ENCODE measurements at regions of chr15 and their contacts with region 1.

Region 1: DNA sequence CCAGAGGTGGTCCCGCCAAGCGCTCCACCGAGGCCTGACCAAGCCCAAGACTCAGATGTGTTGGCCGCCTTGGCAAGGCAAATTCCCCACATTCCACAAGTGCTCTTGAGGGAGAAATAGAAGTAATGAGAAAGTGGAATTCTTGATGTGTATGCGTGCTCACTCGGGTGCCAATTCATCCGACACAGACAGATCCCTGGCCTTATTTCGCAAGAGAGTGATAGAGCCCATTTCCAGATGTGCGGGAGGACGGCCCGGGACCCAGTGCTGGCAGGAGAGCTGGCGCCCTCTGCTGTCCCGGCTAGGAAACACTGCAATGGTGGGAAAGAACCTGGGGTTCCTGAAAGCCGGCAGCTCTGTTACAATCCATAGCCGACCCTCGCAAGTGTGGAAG is 76.0 kb downstream of the HMG20A start:
- DNase-seq: peak; percentile 82
- H3K4me3 ChIP-seq: no peak overlapping the region
- H3K27ac ChIP-seq: peak overlapping the region; percentile 94
- H3K4me1 ChIP-seq: peaks cover 53% of the 10 kb centered on the region
- H3K27me3 ChIP-seq: no peaks in the 10 kb centered on the region
- CTCF ChIP-seq: peak; percentile 94 to 97
- POLR2A ChIP-seq: no peak

Region 2: DNA sequence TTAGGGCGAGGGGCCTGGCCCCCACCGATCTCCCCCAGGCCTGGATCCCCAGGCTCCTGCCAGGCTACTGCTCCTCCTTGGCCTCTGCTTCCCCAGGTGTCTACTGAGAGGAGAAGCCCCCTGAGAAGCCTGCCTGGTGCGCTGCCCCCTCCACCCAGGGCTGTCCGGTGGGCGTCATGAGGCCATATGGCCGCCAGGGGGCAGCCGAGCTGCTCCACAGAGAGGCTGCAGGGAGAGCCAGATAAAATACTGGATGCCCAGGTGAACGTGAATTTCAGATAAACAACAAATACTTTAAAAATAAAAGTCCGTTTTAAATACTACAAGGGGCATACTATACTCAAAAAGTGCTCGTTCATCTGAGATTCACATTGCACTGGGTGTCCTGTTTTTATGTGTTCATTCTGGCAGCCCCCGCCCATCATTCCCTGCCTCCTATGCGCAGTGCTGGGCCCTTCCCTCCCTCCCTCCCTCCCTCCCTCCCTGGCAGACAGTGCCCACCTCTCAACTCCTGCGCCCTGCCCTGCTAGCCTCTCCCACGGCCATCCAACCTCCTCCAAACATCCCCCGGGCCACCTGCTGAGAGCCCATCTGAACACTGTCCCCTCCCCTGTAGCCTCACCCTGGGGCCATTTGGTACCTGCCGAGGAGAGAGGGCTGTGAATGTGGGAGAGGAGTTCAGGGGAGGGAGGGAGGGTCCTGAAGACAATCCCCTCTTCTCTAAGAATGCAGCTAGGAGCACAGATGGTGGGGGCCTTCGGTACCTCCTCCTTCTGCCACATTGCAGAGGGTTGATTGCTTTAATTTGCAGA is 472.2 kb before region 1 on chr15:
- CTCF ChIA-PET with region 1: interaction called, 4 read pairs
- POLR2A ChIA-PET with region 1: no interaction called
- dilution Hi-C with region 1: no loop called
- intact Hi-C with region 1: loop called (anchors 1 kb)
- DNase-seq: peak; percentile 40
- H3K4me3 ChIP-seq: no peak overlapping the region
- H3K27ac ChIP-seq: no peak overlapping the region
- H3K4me1 ChIP-seq: peaks cover 11% of the 10 kb centered on the region
- H3K27me3 ChIP-seq: no peaks in the 10 kb centered on the region
- CTCF ChIP-seq: peak; percentile 91
- POLR2A ChIP-seq: no peak

Region 3: DNA sequence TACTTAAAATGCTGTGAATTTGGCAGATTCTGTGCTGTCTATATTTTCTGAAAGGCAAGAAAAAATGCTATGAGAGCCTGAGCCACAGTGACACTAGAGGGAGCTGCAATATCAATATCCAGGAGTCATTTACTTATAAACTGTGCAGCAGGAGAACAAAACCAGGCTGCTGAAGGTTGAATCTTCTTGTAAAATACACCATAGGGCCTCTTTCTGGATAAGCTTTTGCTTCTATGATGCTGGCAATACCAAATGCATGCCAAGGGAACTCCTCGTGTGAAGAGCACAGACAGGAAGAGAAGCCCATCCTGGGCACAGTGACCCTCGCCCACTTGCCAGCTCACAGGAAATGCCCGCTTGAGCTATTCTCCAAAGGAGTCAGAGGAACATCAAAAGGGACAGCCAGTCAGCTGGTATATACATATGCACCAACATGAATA is 377.8 kb before region 1 on chr15:
- CTCF ChIA-PET with region 1: interaction called, 74 read pairs
- POLR2A ChIA-PET with region 1: no interaction called
- dilution Hi-C with region 1: no loop called
- intact Hi-C with region 1: loop called (anchors 1 kb)
- DNase-seq: peak; percentile 80
- H3K4me3 ChIP-seq: no peak overlapping the region
- H3K27ac ChIP-seq: peak overlapping the region; percentile 8
- H3K4me1 ChIP-seq: peaks cover 14% of the 10 kb centered on the region
- H3K27me3 ChIP-seq: no peaks in the 10 kb centered on the region
- CTCF ChIP-seq: peak; percentile 57 to 63
- POLR2A ChIP-seq: no peak

Region 4: DNA sequence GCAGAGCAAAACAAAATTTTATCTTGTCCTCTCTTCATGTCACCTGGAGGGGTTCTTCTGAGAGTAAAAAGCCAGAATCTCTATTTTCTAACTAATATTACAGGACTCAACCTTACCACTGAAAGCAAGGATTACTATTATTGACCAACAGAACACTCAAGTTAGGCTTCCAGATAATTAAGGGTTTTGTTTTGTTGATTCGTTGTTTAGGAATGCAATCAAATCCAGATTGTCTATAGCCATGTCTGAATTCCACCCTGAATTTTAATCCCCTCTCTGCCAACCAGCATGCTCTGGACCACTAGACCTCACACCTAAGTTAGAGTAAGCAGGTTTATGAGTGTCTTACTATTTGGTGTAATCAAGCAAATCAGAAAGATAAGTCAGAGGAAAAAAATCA is 167.5 kb before region 1 on chr15:
- CTCF ChIA-PET with region 1: no interaction called
- POLR2A ChIA-PET with region 1: no interaction called
- dilution Hi-C with region 1: no loop called
- intact Hi-C with region 1: loop called (anchors 5 kb)
- DNase-seq: no peak
- H3K4me3 ChIP-seq: no peak overlapping the region
- H3K27ac ChIP-seq: no peak overlapping the region
- H3K4me1 ChIP-seq: no peaks in the 10 kb centered on the region
- H3K27me3 ChIP-seq: no peaks in the 10 kb centered on the region
- CTCF ChIP-seq: no peak
- POLR2A ChIP-seq: no peak

Region 5: GRCh38 chr15:77402740-77403379 is 93.8 kb before region 1 on chr15:
- CTCF ChIA-PET with region 1: no interaction called
- POLR2A ChIA-PET with region 1: no interaction called
- dilution Hi-C with region 1: no loop called
- intact Hi-C with region 1: no loop called
- DNase-seq: peak; percentile 45
- H3K4me3 ChIP-seq: no peak overlapping the region
- H3K27ac ChIP-seq: no peak overlapping the region
- H3K4me1 ChIP-seq: peaks cover 3% of the 10 kb centered on the region
- H3K27me3 ChIP-seq: no peaks in the 10 kb centered on the region
- CTCF ChIP-seq: no peak
- POLR2A ChIP-seq: no peak

Region 6: GRCh38 chr15:77455696-77456321 is 40.9 kb before region 1 on chr15:
- CTCF ChIA-PET with region 1: interaction called, 16 read pairs
- POLR2A ChIA-PET with region 1: no interaction called
- dilution Hi-C with region 1: no loop called
- intact Hi-C with region 1: loop called (anchors 1 kb)
- DNase-seq: peak; percentile 95
- H3K4me3 ChIP-seq: peak overlapping the region in 1 of 3 experiments; percentile 23
- H3K27ac ChIP-seq: peak overlapping the region; percentile 96
- H3K4me1 ChIP-seq: peaks cover 54% of the 10 kb centered on the region
- H3K27me3 ChIP-seq: no peaks in the 10 kb centered on the region
- CTCF ChIP-seq: no peak
- POLR2A ChIP-seq: no peak

Region 7: GRCh38 chr15:77507911-77508310 is 11.2 kb after region 1 on chr15:
- CTCF ChIA-PET with region 1: interaction called, 41 read pairs
- POLR2A ChIA-PET with region 1: interaction called, 3 read pairs
- dilution Hi-C with region 1: no loop called
- intact Hi-C with region 1: loop called (anchors 1 kb)
- DNase-seq: peak; percentile 82
- H3K4me3 ChIP-seq: peak overlapping the region in 1 of 3 experiments; percentile 20
- H3K27ac ChIP-seq: peak overlapping the region; percentile 95
- H3K4me1 ChIP-seq: peaks cover 39% of the 10 kb centered on the region
- H3K27me3 ChIP-seq: no peaks in the 10 kb centered on the region
- CTCF ChIP-seq: no peak
- POLR2A ChIP-seq: no peak

Region 8: GRCh38 chr15:77584201-77584600 is 87.5 kb after region 1 on chr15:
- CTCF ChIA-PET with region 1: no interaction called
- POLR2A ChIA-PET with region 1: no interaction called
- dilution Hi-C with region 1: no loop called
- intact Hi-C with region 1: no loop called
- DNase-seq: no peak
- H3K4me3 ChIP-seq: no peak overlapping the region
- H3K27ac ChIP-seq: no peak overlapping the region
- H3K4me1 ChIP-seq: no peaks in the 10 kb centered on the region
- H3K27me3 ChIP-seq: peaks cover 0 to 2% of the 10 kb centered on the region in 2 experiments
- CTCF ChIP-seq: peak in 1 of 2 donors; percentile 38
- POLR2A ChIP-seq: no peak